ENCODE measurements at regions of chr14 and their contacts with region 1.

Region 1: GRCh38 chr14:104650057-104650981 is 39.1 kb upstream of the INF2 start:
- DNase-seq: peak; percentile 89
- ATAC-seq: peak; percentile 91

Region 2: DNA sequence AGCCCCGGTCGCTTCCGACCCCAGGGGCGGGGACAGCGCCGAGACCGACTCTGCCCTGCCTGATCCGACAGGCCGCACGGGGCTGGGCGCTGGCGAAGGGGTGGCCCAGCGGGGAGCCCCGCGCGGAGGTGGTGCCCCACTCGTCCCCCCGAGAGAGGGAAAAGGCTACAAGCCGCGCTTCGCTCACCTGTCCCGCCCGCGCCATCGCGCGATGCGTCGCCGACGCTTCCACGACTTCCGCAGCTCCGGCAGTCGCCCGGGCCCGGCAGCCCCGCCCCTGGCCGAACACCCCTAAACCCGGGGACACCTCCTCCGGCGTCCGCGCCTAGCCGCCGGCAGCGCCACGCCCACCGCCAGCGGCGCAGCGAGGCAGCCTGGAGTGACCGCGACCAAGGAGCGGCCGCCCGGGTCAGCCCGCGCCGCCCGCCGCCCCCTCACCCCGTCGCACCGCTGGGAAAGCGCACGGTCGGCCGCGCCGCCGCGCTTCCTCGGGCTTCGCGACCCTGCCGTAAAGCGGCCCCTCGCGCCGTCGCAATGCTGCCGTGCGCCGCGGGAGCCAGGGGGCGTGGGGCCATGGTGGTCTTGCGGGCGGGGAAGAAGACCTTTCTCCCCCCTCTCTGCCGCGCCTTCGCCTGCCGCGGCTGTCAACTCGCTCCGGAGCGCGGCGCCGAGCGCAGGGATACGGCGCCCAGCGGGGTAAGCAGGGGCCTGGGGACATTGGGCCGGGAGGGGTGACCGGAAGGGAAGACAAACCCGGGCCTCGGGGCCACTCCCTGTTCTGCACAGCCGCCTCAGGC is 1087.7 kb before region 1 on chr14 and contains the starts of genes BAG5 and COA8:
- intact Hi-C with region 1: no loop called
- DNase-seq: peak; percentile 90
- ATAC-seq: peak; percentile 75
- total RNA-seq, gene BAG5: 30.3 TPM
- total RNA-seq, gene COA8: 37.4 TPM

Region 3: GRCh38 chr14:104708606-104709268 is 58.4 kb after region 1 on chr14:
- intact Hi-C with region 1: loop called (anchors 5 kb)
- DNase-seq: peak; percentile 86
- ATAC-seq: peak; percentile 77

Measured in sciatic nerve (tissue), 2 donors.